T-cell (primary cell): ENCODE measurements at regions of chr16 and their contacts with region 1.

Region 1: DNA sequence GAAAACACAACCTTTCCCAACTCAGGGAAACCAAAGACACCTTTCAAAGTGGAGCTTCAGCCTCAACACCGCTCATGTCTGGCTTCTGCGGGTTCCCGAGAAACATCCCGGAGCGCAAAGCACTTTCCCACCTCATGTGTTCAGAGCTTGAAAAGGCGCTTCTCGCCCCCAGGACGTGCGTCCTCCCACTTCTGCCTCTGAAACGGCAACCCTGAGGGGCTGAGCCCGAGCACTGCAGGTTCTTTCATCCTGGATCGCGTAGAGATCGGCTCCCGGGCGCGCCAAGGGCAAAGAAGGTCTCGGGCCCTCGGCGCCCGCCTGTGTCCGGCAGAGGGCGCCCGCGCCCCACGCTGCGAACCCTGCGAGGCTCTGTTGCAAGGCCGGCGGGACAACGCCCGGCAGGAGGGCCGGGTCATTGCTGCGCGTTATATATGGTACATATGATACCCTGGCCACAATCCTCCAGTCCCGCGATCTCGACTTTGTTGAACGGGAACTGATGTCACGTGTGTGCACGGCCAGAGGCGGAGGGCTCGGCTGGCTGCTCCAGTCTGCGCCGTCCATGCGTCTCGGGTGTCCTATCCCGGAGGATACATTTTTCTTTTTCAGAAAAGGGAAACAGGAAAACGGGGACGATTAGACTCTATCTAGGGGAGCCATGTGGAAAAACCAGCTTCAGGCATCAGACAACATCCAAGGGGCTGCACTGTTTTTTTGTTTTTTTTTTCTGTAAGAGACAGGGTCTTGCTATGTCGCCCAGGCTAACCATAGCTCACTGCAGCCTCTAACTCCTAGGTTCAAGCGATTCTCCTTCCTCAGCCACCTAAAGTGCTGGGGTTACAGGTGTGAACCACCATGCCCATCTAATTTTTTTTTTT is 19.1 kb downstream of the COQ7 start:
- DNase-seq: peak; percentile 20 to 85 (median 64)
- ATAC-seq: peak; percentile 94 to 98 (median 95)
- H3K4me3 ChIP-seq: peak overlapping the region; percentile 21 to 63
- H3K4me3 Mint-ChIP-seq: peak overlapping the region; percentile 52 to 58 (median 55)
- H3K27ac ChIP-seq: no peak overlapping the region
- H3K27ac Mint-ChIP-seq: no peak overlapping the region
- H3K4me1 ChIP-seq: peaks cover 0 to 12% of the 10 kb centered on the region in 2 experiments
- H3K4me1 Mint-ChIP-seq: peaks cover 0 to 6% (median 6%) of the 10 kb centered on the region in 3 donors
- H3K27me3 ChIP-seq: peaks cover 0 to 23% of the 10 kb centered on the region in 2 experiments
- H3K27me3 Mint-ChIP-seq: peaks cover 0 to 13% of the 10 kb centered on the region in 2 donors

Region 2: DNA sequence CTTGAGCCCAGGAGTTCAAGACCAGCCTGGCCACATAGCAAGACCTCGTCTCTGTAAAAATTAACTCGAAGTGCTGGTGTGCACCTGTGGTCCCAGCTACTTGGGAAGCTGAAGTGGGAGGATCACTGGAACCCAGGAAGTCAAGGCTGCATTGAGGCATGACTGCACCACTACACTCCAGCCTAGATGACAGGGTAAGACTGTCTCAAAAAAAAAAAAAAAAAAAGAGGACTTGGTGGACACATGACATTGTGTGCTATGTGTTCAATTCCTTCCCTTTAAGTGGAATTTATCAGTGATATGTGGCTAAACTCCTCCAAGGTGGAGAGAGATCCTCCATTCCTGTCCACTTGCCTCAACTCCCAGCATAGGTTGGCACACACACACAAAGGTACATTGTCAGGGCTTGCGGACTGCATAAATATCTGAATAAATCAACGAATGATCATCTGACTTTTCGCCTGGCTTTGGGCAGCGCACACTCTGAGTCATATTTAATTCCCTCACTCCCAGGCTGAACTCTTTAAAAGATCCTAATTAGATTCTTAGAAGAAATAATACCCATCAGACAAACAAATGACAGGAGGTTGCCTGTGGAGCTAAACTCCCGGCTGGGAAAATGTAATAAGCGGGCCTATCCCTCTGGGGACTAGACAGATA is 56.5 kb after region 1 on chr16:
- CTCF ChIA-PET with region 1: no interaction called
- POLR2A ChIA-PET with region 1: no interaction called
- DNase-seq: no peak
- ATAC-seq: no peak
- H3K4me3 ChIP-seq: no peak overlapping the region
- H3K4me3 Mint-ChIP-seq: no peak overlapping the region
- H3K27ac ChIP-seq: no peak overlapping the region
- H3K27ac Mint-ChIP-seq: no peak overlapping the region
- H3K4me1 ChIP-seq: no peaks in the 10 kb centered on the region
- H3K4me1 Mint-ChIP-seq: no peaks in the 10 kb centered on the region
- H3K27me3 ChIP-seq: peaks cover 0 to 12% of the 10 kb centered on the region in 2 experiments
- H3K27me3 Mint-ChIP-seq: peaks cover 10 to 14% of the 10 kb centered on the region in 2 donors

Region 3: DNA sequence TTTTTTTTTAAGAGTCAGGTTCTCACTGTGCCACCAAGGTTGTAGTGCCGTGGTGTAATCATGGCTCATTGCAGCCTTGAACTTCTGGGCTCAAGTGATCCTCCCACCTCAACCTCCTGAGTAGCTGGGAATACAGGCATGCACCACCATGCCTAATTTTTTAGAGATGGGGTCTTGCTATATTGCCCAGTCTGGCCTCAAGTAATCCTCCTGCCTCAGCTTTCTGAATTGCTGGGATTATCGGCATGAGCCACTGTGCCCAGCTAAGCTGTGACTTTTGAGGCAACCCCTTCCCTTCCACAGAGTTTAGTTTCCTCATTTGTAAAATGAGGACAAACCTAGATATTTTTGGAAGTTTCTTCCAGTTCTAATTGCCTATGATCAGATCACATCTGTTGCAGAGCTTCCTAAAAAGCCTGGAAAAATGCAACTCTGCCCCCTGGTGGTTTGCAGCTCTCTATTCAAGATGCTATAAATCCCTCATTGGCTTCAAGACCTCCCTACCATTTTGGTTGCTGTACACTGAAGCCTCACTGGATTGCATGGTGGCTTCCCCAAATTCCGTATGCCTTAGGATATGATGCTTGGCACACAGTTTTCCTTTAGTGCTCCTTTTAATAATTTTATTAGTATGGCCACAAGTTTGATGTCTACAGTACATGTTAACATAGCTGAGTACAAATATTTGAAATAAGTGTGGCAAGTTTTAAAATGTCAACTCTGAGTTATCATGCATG is 416.0 kb after region 1 on chr16:
- CTCF ChIA-PET with region 1: interaction called, 4 to 30 read pairs
- POLR2A ChIA-PET with region 1: no interaction called
- DNase-seq: peak in 34 of 35 experiments; percentile 5 to 76 (median 46)
- ATAC-seq: peak in 3 of 4 experiments; percentile 38 to 46 (median 46)
- H3K4me3 ChIP-seq: no peak overlapping the region
- H3K4me3 Mint-ChIP-seq: no peak overlapping the region
- H3K27ac ChIP-seq: no peak overlapping the region
- H3K27ac Mint-ChIP-seq: no peak overlapping the region
- H3K4me1 ChIP-seq: no peaks in the 10 kb centered on the region
- H3K4me1 Mint-ChIP-seq: no peaks in the 10 kb centered on the region
- H3K27me3 ChIP-seq: no peaks in the 10 kb centered on the region
- H3K27me3 Mint-ChIP-seq: no peaks in the 10 kb centered on the region